ENCODE measurements at regions of chr19 and their contacts with region 1.

Region 1: DNA sequence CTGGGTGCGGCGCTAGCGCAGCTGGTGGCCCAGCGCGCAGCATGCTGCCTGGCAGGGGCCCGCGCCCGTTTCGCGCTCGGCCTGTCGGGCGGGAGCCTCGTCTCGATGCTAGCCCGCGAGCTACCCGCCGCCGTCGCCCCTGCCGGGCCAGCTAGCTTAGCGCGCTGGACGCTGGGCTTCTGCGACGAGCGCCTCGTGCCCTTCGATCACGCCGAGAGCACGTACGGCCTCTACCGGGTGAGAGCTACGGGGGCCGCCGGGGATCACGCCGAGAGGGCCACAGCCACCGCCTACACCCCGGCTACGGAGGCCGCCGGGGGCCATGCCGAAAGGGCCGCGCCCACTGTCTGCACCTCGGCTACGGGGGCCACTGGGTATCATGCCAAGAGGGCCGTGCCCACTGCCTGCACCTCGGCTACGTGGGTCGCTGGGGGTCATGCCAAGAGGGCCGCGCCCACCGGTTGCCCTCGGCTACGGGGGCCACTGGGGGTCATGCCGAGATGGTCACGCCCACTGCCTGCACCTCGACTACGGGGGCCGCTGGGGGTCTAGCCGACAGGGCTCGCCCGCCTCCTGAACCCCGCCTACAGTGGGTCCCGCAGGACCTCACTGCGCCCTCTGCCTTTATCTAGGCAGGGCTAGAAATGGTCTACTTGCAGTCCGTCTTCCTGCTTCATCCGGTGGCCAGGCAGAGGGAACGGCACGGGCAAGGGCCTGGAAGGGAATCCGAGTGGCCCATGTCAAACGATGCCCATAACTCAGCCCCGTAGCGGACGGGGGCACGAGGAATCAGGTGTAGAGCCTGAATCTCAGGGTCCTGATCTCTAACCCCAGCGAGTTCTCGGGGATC is 500 bp downstream of the PGLS start:
- DNase-seq: peak; percentile 90
- H3K4me3 Mint-ChIP-seq: peak overlapping the region; percentile 96
- H3K27ac Mint-ChIP-seq: peak overlapping the region; percentile 80
- H3K4me1 Mint-ChIP-seq: peaks cover 38% of the 10 kb centered on the region
- H3K27me3 Mint-ChIP-seq: no peaks in the 10 kb centered on the region

Region 2: DNA sequence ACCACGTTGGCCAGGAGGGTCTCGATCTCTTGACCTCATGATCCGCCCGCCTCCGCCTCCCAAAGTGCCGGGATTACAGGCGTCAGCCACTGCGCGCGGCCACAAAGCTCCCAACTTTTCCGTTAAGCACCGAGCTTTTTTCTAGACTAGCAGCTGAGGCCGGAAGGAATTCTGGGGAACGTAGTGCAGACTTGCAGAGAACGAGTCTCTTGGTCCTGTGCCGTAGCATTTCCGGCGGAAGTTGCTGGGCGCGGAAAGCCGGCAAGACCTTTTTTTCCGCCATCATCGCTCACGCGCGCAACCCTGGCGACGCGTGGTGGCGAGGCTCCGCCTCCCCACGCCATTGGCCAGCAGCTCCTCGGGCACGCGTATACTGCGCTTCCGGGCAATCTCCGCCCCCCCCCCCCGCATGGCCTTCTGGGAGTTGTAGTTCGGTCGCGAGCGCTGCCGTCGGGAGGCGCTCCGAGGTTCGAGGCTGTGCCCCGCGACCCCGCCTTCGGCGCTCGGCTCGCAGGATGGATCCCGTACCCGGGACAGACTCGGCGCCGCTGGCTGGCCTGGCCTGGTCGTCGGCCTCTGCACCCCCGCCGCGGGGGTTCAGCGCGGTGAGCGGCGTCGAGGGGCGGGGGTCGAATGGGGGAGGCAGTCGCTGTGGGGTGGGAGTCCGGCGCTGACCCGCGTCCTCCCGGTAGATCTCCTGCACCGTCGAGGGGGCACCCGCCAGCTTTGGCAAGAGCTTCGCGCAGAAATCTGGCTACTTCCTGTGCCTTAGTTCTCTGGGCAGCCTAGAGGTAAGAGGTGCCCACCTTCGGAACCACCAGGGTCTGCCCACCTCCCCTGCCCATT is 92.1 kb before region 1 on chr19 and contains the start of gene MVB12A:
- CTCF ChIA-PET with region 1: no interaction called
- POLR2A ChIA-PET with region 1: interaction called, 3 read pairs
- intact Hi-C with region 1: loop called (anchors 5 kb)
- DNase-seq: peak; percentile 98
- H3K4me3 Mint-ChIP-seq: peak within 1 kb of the TSS; percentile 86
- H3K27ac Mint-ChIP-seq: peak within 1 kb of the TSS; percentile 87
- H3K4me1 Mint-ChIP-seq: peaks cover 19% of the 10 kb centered on the region
- H3K27me3 Mint-ChIP-seq: no peaks in the 10 kb centered on the region
- total RNA-seq, gene MVB12A: 36.5 to 42.4 TPM

Region 3: GRCh38 chr19:17522988-17523872 is 11.3 kb after region 1 on chr19:
- CTCF ChIA-PET with region 1: interaction called, 9 read pairs
- POLR2A ChIA-PET with region 1: interaction called, 13 read pairs
- intact Hi-C with region 1: no loop called
- DNase-seq: peak; percentile 80
- H3K4me3 Mint-ChIP-seq: peak overlapping the region; percentile 24
- H3K27ac Mint-ChIP-seq: peak overlapping the region; percentile 83
- H3K4me1 Mint-ChIP-seq: peaks cover 22% of the 10 kb centered on the region
- H3K27me3 Mint-ChIP-seq: no peaks in the 10 kb centered on the region

Region 4: GRCh38 chr19:17539238-17540117 is 27.5 kb after region 1 on chr19:
- CTCF ChIA-PET with region 1: no interaction called
- POLR2A ChIA-PET with region 1: no interaction called
- intact Hi-C with region 1: loop called (anchors 1 kb)
- DNase-seq: peak; percentile 98
- H3K4me3 Mint-ChIP-seq: peak overlapping the region; percentile 74
- H3K27ac Mint-ChIP-seq: peak overlapping the region; percentile 58
- H3K4me1 Mint-ChIP-seq: peaks cover 12% of the 10 kb centered on the region
- H3K27me3 Mint-ChIP-seq: peaks cover 3% of the 10 kb centered on the region